ENCODE measurements at regions of chr2 and their contacts with region 1.

Region 1: GRCh38 chr2:241546771-241547498 is 11.6 kb upstream of the BOK start:
- DNase-seq: peak in 1 of 2 experiments; percentile 76
- H3K4me3 ChIP-seq: no peak overlapping the region
- H3K27ac ChIP-seq: no peak overlapping the region
- H3K4me1 ChIP-seq: peaks cover 16% of the 10 kb centered on the region
- H3K27me3 ChIP-seq: no peaks in the 10 kb centered on the region; the same call in 1 of the 2 replicates
- CTCF ChIP-seq: no peak

Region 2: DNA sequence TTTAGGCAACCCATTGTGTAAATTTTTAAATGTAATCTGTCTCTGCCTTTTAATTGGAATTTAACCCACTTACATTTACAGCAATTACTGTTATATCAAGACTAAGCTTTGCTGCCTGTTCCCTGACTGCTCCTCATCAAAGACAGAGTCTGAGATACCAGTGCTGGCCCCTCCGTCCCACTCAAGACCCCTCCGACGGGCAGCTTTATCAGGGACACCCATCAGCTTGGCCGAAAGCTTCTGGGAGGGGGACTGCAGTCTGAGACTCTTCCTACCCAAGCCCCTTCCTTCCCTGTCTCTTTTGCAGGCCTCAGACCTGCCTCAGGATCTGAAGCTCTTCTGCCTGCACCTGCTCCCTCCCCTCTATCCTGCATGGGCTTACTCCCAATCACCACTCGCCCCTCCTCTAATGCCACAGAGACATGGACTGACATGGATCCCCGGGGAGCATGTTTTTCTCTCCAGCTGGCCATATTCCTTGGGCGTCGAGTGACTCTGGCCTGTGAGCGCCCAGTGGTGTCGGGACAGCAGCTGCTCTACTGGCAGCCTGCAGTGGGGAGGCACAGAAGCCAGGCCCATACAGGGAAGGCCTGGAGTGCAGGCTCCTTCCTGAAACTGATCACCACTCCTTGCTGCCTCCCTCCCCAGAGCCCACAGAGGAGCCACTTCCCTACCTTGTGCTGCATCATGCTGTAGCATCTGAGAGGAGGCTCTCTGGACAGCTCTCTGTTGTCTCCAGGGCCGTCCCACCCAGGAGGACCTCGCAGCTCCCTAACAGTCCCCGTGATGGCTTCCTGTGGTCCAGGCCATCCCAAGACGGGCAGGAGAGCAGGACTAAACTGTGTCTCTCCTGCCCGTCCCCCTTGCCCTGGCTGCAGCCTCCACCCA is 723.2 kb before region 1 on chr2:
- CTCF ChIA-PET with region 1: interaction called, 14 read pairs
- POLR2A ChIA-PET with region 1: no interaction called
- intact Hi-C with region 1: no loop called
- DNase-seq: no peak
- H3K4me3 ChIP-seq: no peak overlapping the region
- H3K27ac ChIP-seq: no peak overlapping the region
- H3K4me1 ChIP-seq: no peaks in the 10 kb centered on the region
- H3K27me3 ChIP-seq: peaks cover 85% of the 10 kb centered on the region
- CTCF ChIP-seq: no peak

Region 3: DNA sequence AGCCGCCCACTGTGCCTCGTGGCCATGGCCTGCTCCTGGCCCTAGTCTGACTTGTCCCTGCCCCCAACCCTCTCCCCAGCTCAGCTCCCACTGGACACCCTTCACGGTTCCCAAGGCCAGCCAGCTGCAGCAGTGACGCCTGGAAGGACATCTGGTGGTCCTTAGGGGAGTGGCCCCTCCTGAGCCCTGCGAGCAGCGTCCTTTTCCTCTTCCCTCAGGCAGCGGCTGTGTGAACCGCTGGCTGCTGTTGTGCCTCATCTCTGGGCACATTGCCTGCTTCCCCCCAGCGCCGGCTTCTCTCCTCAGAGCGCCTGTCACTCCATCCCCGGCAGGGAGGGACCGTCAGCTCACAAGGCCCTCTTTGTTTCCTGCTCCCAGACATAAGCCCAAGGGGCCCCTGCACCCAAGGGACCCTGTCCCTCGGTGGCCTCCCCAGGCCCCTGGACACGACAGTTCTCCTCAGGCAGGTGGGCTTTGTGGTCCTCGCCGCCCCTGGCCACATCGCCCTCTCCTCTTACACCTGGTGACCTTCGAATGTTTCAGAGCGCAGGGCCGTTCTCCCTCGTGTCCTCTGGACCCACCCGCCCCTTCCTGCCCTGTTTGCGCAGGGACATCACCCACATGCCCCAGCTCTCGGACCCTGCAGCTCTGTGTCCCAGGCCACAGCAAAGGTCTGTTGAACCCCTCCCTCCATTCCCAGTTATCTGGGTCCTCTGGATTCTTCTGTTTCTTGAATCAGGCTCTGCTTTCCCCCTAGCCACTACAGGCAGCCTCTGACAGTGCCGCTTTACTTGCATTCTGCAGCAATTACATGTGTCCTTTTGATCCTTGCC is 322.7 kb before region 1 on chr2:
- CTCF ChIA-PET with region 1: no interaction called
- POLR2A ChIA-PET with region 1: no interaction called
- intact Hi-C with region 1: no loop called
- DNase-seq: no peak
- H3K4me3 ChIP-seq: no peak overlapping the region
- H3K27ac ChIP-seq: no peak overlapping the region
- H3K4me1 ChIP-seq: peaks cover 9% of the 10 kb centered on the region
- H3K27me3 ChIP-seq: no peaks in the 10 kb centered on the region
- CTCF ChIP-seq: no peak

Region 4: GRCh38 chr2:241454837-241455485 is 92.0 kb before region 1 on chr2:
- CTCF ChIA-PET with region 1: interaction called, 4 read pairs
- POLR2A ChIA-PET with region 1: interaction called, 10 read pairs
- intact Hi-C with region 1: no loop called
- DNase-seq: no peak
- H3K4me3 ChIP-seq: no peak overlapping the region
- H3K27ac ChIP-seq: no peak overlapping the region
- H3K4me1 ChIP-seq: no peaks in the 10 kb centered on the region
- H3K27me3 ChIP-seq: no peaks in the 10 kb centered on the region
- CTCF ChIP-seq: no peak

Region 5: GRCh38 chr2:241489733-241490680 is 56.9 kb before region 1 on chr2:
- CTCF ChIA-PET with region 1: no interaction called
- POLR2A ChIA-PET with region 1: no interaction called
- intact Hi-C with region 1: no loop called
- DNase-seq: no peak
- H3K4me3 ChIP-seq: no peak overlapping the region
- H3K27ac ChIP-seq: no peak overlapping the region
- H3K4me1 ChIP-seq: no peaks in the 10 kb centered on the region
- H3K27me3 ChIP-seq: no peaks in the 10 kb centered on the region
- CTCF ChIP-seq: no peak

Region 6: DNA sequence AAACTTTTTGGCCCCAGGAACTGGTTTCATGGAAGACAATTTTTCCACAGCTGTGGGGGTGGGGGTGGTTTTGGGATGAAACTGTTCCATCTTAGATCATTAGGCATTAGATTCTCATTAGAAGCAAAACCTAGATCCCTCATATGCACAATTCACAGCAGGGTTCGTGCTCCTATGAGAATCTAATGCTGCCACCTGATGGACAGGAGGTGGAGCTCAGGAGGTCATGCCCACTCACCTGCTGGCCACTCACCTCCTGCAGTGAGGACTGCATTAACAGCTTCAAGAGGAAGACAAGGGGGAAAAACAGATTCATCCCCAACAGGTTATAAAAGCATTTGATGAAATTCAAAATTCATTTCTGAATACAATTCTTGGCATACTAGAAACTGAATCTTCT is 51.5 kb after region 1 on chr2:
- CTCF ChIA-PET with region 1: interaction called, 12 read pairs
- POLR2A ChIA-PET with region 1: no interaction called
- intact Hi-C with region 1: loop called (anchors 2 kb)
- DNase-seq: peak; percentile 48 to 64
- H3K4me3 ChIP-seq: no peak overlapping the region
- H3K27ac ChIP-seq: no peak overlapping the region
- H3K4me1 ChIP-seq: no peaks in the 10 kb centered on the region
- H3K27me3 ChIP-seq: no peaks in the 10 kb centered on the region
- CTCF ChIP-seq: peak; percentile 61; the same call in 1 of the 2 replicates

Region 7: DNA sequence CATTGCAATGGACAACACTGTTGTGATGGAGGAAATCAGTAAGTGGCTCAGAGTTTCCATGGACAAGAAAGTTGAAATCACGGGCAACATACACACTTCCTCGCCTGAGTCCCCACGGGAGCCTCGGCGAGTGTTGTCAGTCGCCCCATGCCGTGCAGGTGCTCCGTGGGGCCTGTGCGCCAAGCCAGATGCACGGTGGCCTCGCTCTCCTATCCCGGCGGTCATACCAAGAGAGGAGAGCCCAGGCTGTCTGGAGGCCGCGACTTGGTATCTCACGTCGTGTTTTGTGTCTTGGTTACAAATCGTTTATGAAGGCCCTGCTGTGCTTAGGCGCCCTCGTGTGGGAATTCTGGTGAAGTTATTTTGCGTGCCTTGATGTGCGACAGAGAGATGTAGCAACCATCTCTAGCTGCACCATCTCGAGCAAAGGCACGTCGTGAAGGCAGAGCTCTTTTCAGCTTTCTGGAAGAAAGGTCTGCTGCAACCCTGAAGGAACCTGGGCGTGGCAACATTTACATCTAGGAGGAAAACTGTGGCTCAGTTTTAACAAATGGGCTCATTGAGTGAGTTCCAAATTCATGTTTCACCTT is 112.3 kb after region 1 on chr2:
- CTCF ChIA-PET with region 1: no interaction called
- POLR2A ChIA-PET with region 1: no interaction called
- intact Hi-C with region 1: loop called (anchors 1 kb)
- DNase-seq: peak in 1 of 2 experiments; percentile 50
- H3K4me3 ChIP-seq: no peak overlapping the region
- H3K27ac ChIP-seq: no peak overlapping the region
- H3K4me1 ChIP-seq: no peaks in the 10 kb centered on the region
- H3K27me3 ChIP-seq: no peaks in the 10 kb centered on the region
- CTCF ChIP-seq: peak; percentile 67

Measured in PC-9 (cell line).